Activated CD8-positive, alpha-beta memory T cell treated with anti-CD3 and anti-CD28 coated beads, Interleukin-2, amount 10 ng/mL, durations not matched to agents 7 days and 5 days (primary cell): ENCODE measurements at regions of chr16 and their contacts with region 1.

Region 1: DNA sequence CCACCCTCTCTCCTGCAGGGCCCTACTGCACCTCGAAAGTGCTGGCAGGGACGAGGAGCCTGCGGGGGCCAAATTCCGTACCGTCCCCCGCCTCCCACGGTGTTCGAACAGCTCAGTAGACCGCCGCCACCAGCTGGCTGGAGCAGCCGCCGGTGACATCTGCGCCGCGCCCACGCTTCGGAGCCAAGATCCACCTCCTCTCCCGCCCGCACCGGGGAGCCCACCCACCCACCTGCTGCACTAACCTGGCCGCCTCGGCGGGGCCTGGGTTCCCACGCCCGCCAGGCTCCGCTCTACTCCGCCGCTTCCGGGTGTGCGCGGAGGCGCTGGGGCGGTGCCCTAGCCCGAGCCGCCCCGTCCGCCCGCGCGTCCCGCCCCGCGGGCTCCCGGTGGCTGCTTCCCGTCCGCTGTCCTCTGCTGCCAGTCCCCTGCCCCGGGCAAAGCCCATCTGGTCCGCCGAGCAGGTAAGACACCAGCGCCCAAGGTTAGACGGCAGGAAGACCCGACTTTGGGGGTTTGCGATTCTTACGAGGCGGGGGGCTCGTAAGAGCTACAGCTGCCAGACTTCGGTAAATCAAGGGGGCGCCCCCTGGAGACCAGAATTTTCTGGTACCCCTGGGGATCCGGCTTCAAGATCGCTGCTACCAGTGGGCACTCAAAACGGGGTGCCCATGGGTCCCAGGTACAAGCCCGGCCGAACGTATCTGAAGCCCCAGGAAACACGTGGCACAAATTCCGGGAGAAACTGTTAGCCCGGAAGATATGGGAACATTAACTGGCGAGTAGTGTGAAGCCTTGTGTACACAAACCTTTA is at the starts of genes FBXL8 and TRADD:
- DNase-seq: peak; percentile 89
- ATAC-seq: peak; percentile 76
- H3K4me3 Mint-ChIP-seq: peak within 1 kb of the TSS; percentile 92
- H3K27ac Mint-ChIP-seq: peak within 1 kb of the TSS; percentile 97
- H3K4me1 Mint-ChIP-seq: peaks cover 62% of the 10 kb centered on the region
- H3K27me3 Mint-ChIP-seq: peaks cover 13% of the 10 kb centered on the region
- total RNA-seq, gene FBXL8: 15.7 to 24.5 TPM
- total RNA-seq, gene TRADD: 36.4 to 52.6 TPM

Region 2: DNA sequence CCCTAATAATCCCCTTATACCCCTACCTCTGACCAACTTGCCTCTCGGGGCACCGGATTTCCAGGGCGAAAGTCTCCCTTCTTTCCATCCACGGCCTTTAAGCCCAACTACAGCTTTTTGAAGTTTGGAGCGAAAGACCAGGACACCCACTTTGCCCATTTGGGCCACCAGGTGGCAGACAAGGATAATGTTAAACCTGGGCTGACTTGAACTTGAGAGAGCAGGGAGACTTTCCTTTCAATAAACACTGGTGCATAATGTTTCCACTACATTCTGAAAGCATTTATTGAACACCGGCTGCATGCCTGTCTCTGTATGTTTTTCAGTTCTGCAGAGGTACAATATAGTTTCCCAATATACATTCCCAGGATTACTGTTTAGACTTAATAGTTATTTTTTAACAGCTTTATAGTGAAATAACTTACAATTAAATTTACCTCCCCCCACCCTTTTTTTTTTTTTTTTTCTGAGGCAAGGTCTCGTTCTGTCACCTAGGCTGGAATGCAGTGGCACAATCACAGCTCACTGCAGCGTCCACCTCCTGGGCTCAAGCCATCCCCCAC is 205.6 kb before region 1 on chr16:
- CTCF ChIA-PET with region 1: interaction called, 28 read pairs
- DNase-seq: peak; percentile 88
- ATAC-seq: peak; percentile 89
- H3K4me3 Mint-ChIP-seq: no peak overlapping the region
- H3K27ac Mint-ChIP-seq: no peak overlapping the region
- H3K4me1 Mint-ChIP-seq: peaks cover 40% of the 10 kb centered on the region
- H3K27me3 Mint-ChIP-seq: peaks cover 21% of the 10 kb centered on the region

Region 3: DNA sequence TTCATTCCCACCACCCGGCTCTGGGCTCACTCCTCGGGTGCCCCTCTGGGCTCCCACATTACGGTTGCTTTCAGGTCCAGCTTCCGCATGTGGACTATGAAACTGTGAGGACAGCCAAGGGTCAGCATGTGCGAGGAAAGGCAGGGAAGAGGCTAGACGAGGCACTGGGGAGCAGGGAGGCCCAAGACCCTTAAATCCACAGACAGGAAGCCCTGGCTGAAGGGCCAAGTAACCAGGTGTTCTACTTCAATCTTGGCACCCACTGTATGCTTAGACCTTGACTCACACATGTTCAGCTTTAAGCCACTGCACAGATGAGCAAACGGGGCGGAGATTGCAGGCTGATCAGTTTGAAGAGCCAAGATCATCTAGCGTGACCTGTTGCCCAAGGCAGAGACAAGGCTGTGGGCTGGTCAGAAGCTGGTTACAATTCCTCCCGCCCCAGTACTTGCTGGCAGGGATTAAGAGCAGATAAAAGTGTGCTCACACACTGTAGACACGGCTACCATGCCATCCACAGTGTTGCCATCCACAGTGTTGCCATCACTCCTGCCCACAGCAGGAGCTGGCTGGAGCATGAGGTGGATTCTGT is 171.5 kb before region 1 on chr16 and contains the start of gene CES4A:
- CTCF ChIA-PET with region 1: interaction called, 34 read pairs
- DNase-seq: no peak
- ATAC-seq: no peak
- H3K4me3 Mint-ChIP-seq: no peak within 1 kb of the TSS
- H3K27ac Mint-ChIP-seq: peak within 1 kb of the TSS; percentile 73
- H3K4me1 Mint-ChIP-seq: peaks cover 45% of the 10 kb centered on the region
- H3K27me3 Mint-ChIP-seq: no peaks in the 10 kb centered on the region
- total RNA-seq, gene CES4A: 8.1 to 11.7 TPM

Region 4: GRCh38 chr16:67055712-67056487 is 103.9 kb before region 1 on chr16:
- CTCF ChIA-PET with region 1: interaction called, 10 read pairs
- DNase-seq: peak; percentile 49
- ATAC-seq: peak; percentile 73
- H3K4me3 Mint-ChIP-seq: peak overlapping the region; percentile 48
- H3K27ac Mint-ChIP-seq: peak overlapping the region; percentile 82
- H3K4me1 Mint-ChIP-seq: peaks cover 61% of the 10 kb centered on the region
- H3K27me3 Mint-ChIP-seq: no peaks in the 10 kb centered on the region

Region 5: DNA sequence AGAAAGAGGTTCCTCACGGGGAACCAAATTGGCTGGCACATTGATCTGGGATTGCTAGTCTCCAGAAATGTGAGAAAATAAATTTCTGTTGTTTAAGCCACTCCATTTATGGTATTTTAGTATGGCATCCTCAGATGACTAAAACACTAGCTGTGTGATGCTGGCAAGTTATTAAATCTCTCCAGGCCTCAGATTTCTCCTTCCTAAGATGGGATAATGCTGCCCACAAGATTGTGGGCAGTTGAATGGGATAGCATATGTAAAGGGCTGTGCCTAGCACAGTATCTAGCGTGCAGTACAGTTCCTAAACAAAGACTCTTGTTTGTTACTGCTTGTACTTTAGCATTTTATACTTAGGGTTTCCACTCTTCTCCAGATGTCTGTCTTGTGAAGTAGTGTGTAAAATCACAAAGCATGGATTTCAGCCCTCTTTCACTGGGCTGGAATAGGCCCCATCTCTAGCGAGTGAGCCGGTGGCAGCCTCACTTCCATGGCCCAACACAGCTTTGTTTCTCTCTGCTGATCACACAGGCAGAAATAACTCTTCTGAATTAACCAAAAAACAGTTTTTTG is 88.2 kb before region 1 on chr16:
- CTCF ChIA-PET with region 1: no interaction called
- DNase-seq: no peak
- ATAC-seq: no peak
- H3K4me3 Mint-ChIP-seq: no peak overlapping the region
- H3K27ac Mint-ChIP-seq: no peak overlapping the region
- H3K4me1 Mint-ChIP-seq: no peaks in the 10 kb centered on the region
- H3K27me3 Mint-ChIP-seq: no peaks in the 10 kb centered on the region

Region 6: GRCh38 chr16:67173808-67174705 is 14.3 kb after region 1 on chr16:
- CTCF ChIA-PET with region 1: interaction called, 88 read pairs
- DNase-seq: peak; percentile 81
- ATAC-seq: peak; percentile 79
- H3K4me3 Mint-ChIP-seq: peak overlapping the region; percentile 76
- H3K27ac Mint-ChIP-seq: peak overlapping the region; percentile 69
- H3K4me1 Mint-ChIP-seq: peaks cover 47% of the 10 kb centered on the region
- H3K27me3 Mint-ChIP-seq: peaks cover 48% of the 10 kb centered on the region

Region 7: DNA sequence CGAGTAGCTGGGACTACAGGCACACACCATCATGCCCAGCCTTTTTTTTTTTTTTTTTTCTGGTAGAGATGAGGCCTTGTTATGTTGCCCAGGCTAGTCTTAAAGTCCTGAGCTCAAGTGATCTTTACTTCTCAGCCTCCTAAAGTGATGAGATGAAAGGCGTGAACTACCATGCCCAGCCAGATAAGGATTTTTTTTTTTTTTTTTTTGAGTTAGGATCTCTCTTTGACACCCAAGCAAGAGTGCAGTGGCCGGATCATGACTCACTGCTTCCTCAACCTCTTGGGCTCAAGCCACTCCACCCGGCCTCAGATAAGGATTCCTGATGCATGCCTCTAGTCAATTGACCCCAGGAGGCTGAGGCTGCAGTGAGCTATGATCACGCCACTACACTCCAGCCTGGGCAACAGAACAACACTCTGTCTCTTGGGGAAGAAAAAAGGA is 108.4 kb after region 1 on chr16:
- CTCF ChIA-PET with region 1: no interaction called
- DNase-seq: no peak
- ATAC-seq: no peak
- H3K4me3 Mint-ChIP-seq: no peak overlapping the region
- H3K27ac Mint-ChIP-seq: no peak overlapping the region
- H3K4me1 Mint-ChIP-seq: no peaks in the 10 kb centered on the region
- H3K27me3 Mint-ChIP-seq: no peaks in the 10 kb centered on the region